K562 (cell line): ENCODE measurements at regions of chr10 and their contacts with region 1.

Region 1: DNA sequence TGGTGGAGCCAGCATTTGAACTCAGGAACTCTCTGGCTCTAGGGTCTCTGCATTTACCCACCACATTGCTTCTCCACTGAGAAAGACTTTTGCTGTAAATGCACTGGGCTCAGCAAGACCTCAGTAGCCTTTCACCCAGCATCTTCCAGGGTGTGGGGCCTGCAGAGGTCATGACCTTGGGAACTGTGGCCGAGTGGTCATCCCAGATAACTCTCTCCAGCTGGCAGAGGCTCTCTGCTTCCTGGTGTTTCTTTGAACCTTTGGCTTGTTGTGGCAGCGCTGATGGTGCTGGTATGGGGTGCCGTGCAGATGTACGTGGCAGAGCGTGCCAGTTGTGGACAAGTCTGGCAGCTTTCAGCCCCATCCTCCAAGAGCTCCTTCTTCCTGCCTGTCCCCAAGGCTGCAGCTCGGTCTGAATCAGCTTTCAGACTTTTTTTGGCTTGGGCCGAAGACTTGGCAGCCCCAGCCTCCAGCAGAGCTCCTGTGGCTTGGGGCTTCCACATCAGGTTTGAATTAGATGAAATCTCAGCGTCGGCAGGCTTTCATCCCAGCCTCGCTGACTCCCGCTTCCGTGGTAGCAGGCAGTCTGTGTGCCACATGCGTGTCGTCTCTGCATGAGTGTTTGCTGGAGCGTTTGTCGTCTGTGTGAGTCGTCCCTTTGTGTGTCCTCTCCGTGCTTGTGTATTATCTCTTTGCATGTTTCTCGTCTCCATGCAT is 21.5 kb downstream of the ADAMTS14 start:
- DNase-seq: peak; percentile 73 to 87 (median 77)
- ATAC-seq: peak; percentile 61
- H3K4me3 ChIP-seq: no peak overlapping the region
- H3K27ac ChIP-seq: peak overlapping the region; percentile 17; the same call in 2 of the 3 replicates
- H3K4me1 ChIP-seq: peaks cover 47 to 51% of the 10 kb centered on the region in 2 experiments
- H3K27me3 ChIP-seq: no peaks in the 10 kb centered on the region
- CTCF ChIP-seq: no peak
- EP300 ChIP-seq: peak; percentile 66; the same call in 1 of the 2 replicates
- POLR2A ChIP-seq: no peak
- RAD21 ChIP-seq: no peak

Region 2: GRCh38 chr10:69352569-69353264 is 1341.1 kb before region 1 on chr10:
- CTCF ChIA-PET with region 1: no interaction called
- POLR2A ChIA-PET with region 1: no interaction called
- in situ Hi-C with region 1: no loop called
- intact Hi-C with region 1: no loop called
- DNase-seq: no peak
- ATAC-seq: no peak
- H3K4me3 ChIP-seq: no peak overlapping the region
- H3K27ac ChIP-seq: no peak overlapping the region
- H3K4me1 ChIP-seq: no peaks in the 10 kb centered on the region
- H3K27me3 ChIP-seq: no peaks in the 10 kb centered on the region
- CTCF ChIP-seq: no peak
- EP300 ChIP-seq: no peak
- POLR2A ChIP-seq: no peak
- RAD21 ChIP-seq: no peak

Region 3: GRCh38 chr10:70615784-70616522 is 77.8 kb before region 1 on chr10:
- CTCF ChIA-PET with region 1: no interaction called
- POLR2A ChIA-PET with region 1: no interaction called
- in situ Hi-C with region 1: no loop called
- intact Hi-C with region 1: no loop called
- DNase-seq: no peak
- ATAC-seq: no peak
- H3K4me3 ChIP-seq: no peak overlapping the region
- H3K27ac ChIP-seq: no peak overlapping the region
- H3K4me1 ChIP-seq: peaks cover 0 to 24% of the 10 kb centered on the region in 2 experiments; a peak in 4 of 5 replicates
- H3K27me3 ChIP-seq: no peaks in the 10 kb centered on the region
- CTCF ChIP-seq: no peak
- EP300 ChIP-seq: no peak
- POLR2A ChIP-seq: no peak
- RAD21 ChIP-seq: no peak

Region 4: GRCh38 chr10:70682920-70683600 is 10.7 kb before region 1 on chr10:
- CTCF ChIA-PET with region 1: no interaction called
- POLR2A ChIA-PET with region 1: interaction called, 18 read pairs
- in situ Hi-C with region 1: no loop called
- intact Hi-C with region 1: no loop called
- DNase-seq: peak in 1 of 4 experiments; percentile 42
- ATAC-seq: peak; percentile 40
- H3K4me3 ChIP-seq: no peak overlapping the region
- H3K27ac ChIP-seq: peak overlapping the region; percentile 53
- H3K4me1 ChIP-seq: peaks cover 54 to 55% of the 10 kb centered on the region in 2 experiments
- H3K27me3 ChIP-seq: no peaks in the 10 kb centered on the region
- CTCF ChIP-seq: no peak
- EP300 ChIP-seq: no peak
- POLR2A ChIP-seq: no peak
- RAD21 ChIP-seq: no peak